ENCODE measurements at regions of chrX and their contacts with region 1.

Region 1: DNA sequence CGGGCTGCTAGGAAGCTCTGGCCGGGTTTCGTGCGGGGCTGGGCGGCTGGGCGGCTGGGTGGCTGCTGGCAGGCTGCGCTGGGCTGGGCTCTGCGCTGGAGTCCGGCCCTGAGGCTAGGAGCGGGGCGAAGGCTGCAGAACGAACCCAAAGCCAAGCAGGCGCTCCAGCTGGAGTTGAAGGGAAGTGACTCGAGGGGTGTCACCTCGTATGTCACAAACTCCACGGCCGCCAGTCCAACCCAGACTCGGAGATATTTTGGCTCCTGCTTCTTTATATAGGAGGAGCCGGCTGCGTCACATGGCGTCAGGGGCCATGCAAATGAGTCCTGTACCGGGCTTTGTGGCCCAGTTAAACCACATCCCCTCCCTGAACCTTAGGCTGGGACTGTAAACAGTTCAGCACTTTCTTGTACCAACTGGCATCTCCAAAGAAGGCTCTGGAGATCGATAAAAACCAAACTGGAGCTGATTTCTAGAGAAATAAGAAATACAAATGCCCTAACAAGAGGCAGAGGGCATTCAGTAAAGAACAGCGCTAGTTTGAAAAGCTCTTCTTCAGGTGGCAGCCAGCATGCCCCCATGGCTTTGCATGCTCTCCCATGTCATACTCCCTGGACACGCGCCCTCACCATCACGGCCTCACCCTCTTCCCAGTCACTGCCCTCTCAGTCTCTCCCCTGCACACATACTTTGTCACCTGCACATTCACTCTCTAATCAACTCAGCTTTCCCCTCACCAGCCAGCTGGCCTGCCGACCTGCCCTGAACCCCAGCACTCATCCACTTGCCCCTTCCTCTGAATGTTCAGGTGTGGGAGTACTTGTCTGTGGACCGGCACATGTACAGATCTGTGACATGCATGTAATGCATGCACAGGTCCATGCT is 58.5 kb downstream of the TSC22D3 start:
- DNase-seq: peak; percentile 84
- H3K4me3 ChIP-seq: peak overlapping the region; percentile 49 to 84 (median 58)
- H3K27ac ChIP-seq: peak overlapping the region; percentile 77
- H3K4me1 ChIP-seq: peaks cover 11% of the 10 kb centered on the region
- H3K27me3 ChIP-seq: no peaks in the 10 kb centered on the region
- CTCF ChIP-seq: no peak
- POLR2A ChIP-seq: peak; percentile 93

Region 2: DNA sequence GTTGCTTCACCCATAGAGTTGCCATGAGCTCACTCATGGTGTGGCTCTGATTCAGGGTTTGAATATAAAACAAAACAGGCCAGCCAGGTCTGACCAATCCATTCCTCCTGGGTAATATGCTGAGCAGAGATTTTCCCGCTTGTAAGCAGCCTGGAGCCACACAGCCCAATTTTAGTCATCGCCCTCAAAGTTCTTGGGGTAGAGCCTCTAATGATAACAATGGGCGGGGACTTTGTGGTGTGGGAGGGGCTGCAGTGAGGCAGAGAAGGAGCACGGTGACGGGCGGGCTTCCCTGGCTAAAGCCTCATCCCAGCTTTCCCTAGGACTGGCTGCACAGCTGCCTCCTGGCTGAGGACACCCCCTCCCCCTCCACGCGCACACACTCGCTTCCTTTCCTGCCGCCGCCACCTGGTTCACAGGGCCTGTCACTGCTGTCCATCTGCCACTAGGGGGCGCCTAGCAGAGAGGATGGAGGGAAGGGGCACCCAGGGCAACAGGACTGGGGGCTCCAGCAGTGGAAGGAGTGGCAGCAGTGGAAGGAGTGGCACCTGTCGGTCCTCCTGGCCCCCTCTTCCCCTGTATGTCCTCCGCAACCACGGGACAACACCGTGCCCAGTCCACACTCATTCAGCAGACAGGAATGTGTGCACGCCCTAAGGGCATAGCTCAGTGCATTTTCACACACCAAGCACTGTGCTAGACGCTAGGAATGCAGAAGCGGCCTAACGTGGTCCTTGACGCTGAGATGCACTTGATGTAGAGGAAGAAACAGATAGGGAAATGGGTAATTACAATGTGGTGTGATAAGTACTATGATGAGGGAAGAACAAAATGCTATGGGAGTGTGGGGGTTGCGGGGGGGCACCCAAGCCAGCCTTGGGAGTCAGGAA is 61.9 kb before region 1 on chrX:
- CTCF ChIA-PET with region 1: interaction called, 28 read pairs
- POLR2A ChIA-PET with region 1: interaction called, 4 read pairs
- dilution Hi-C with region 1: no loop called
- intact Hi-C with region 1: loop called (anchors 1 kb)
- DNase-seq: peak; percentile 49
- H3K4me3 ChIP-seq: no peak overlapping the region
- H3K27ac ChIP-seq: peak overlapping the region; percentile 45
- H3K4me1 ChIP-seq: peaks cover 6% of the 10 kb centered on the region
- H3K27me3 ChIP-seq: no peaks in the 10 kb centered on the region
- CTCF ChIP-seq: peak; percentile 65 to 74
- POLR2A ChIP-seq: no peak

Region 3: DNA sequence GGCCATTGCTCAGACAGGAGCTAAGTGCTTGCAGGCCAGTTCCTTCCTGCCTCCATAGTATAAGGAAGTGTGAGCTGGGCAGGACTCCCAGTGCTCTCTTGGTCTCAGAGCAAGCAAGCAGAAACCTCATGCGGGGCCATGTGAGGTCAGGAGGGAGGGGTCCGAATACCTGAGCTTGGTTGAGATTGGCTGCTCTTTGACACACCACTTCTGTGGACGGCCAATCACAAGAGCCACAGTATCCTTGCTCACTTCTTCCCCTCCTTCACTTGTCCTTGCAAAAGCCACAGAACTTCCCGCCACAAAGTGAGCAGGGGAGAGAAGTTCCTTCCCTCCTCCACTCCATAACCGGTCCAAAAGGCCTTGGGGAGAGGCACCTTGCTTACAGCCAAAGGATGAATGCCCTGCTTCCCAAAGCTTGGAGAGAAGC is 32.1 kb before region 1 on chrX:
- CTCF ChIA-PET with region 1: interaction called, 34 read pairs
- POLR2A ChIA-PET with region 1: no interaction called
- dilution Hi-C with region 1: no loop called
- intact Hi-C with region 1: no loop called
- DNase-seq: peak; percentile 83
- H3K4me3 ChIP-seq: no peak overlapping the region
- H3K27ac ChIP-seq: peak overlapping the region; percentile 14
- H3K4me1 ChIP-seq: peaks cover 41% of the 10 kb centered on the region
- H3K27me3 ChIP-seq: no peaks in the 10 kb centered on the region
- CTCF ChIP-seq: no peak
- POLR2A ChIP-seq: no peak

Region 4: GRCh38 chrX:107731831-107732502 is 14.9 kb after region 1 on chrX:
- CTCF ChIA-PET with region 1: interaction called, 15 read pairs
- POLR2A ChIA-PET with region 1: interaction called, 8 read pairs
- dilution Hi-C with region 1: no loop called
- intact Hi-C with region 1: no loop called
- DNase-seq: peak; percentile 90
- H3K4me3 ChIP-seq: no peak overlapping the region
- H3K27ac ChIP-seq: peak overlapping the region; percentile 13
- H3K4me1 ChIP-seq: peaks cover 24% of the 10 kb centered on the region
- H3K27me3 ChIP-seq: no peaks in the 10 kb centered on the region
- CTCF ChIP-seq: no peak
- POLR2A ChIP-seq: peak; percentile 26

Region 5: DNA sequence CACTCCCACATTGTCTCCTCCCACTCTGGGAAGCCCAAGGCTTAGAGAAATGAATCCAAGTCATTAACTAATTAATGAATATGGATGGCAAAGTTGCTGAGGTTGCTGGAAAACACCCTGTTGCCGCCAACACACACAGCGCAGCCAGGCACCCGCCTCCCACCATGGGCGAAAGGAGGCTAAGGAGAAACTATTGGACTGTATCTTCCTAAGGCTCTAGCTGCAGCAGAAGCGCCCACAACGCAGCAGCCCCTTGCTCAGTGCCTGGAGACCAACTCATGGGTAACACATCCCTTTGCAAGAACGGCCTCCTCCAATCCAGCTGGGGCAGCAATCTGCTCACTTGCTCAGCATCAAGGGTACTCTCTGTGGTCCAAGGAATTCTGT is 24.3 kb after region 1 on chrX:
- CTCF ChIA-PET with region 1: interaction called, 5 read pairs
- POLR2A ChIA-PET with region 1: no interaction called
- dilution Hi-C with region 1: no loop called
- intact Hi-C with region 1: loop called (anchors 1 kb)
- DNase-seq: no peak
- H3K4me3 ChIP-seq: no peak overlapping the region
- H3K27ac ChIP-seq: peak overlapping the region; percentile 2
- H3K4me1 ChIP-seq: peaks cover 14% of the 10 kb centered on the region
- H3K27me3 ChIP-seq: no peaks in the 10 kb centered on the region
- CTCF ChIP-seq: no peak
- POLR2A ChIP-seq: no peak

Region 6: GRCh38 chrX:107849740-107850421 is 132.8 kb after region 1 on chrX:
- CTCF ChIA-PET with region 1: no interaction called
- POLR2A ChIA-PET with region 1: no interaction called
- dilution Hi-C with region 1: no loop called
- intact Hi-C with region 1: no loop called
- DNase-seq: peak; percentile 69
- H3K4me3 ChIP-seq: peak overlapping the region in 1 of 3 experiments; percentile 11
- H3K27ac ChIP-seq: peak overlapping the region; percentile 76
- H3K4me1 ChIP-seq: peaks cover 56% of the 10 kb centered on the region
- H3K27me3 ChIP-seq: no peaks in the 10 kb centered on the region
- CTCF ChIP-seq: no peak
- POLR2A ChIP-seq: no peak

Region 7: GRCh38 chrX:107894038-107894437 is 177.0 kb after region 1 on chrX:
- CTCF ChIA-PET with region 1: interaction called, 3 read pairs
- POLR2A ChIA-PET with region 1: no interaction called
- dilution Hi-C with region 1: no loop called
- intact Hi-C with region 1: loop called (anchors 1 kb)
- DNase-seq: peak; percentile 47
- H3K4me3 ChIP-seq: no peak overlapping the region
- H3K27ac ChIP-seq: no peak overlapping the region
- H3K4me1 ChIP-seq: no peaks in the 10 kb centered on the region
- H3K27me3 ChIP-seq: no peaks in the 10 kb centered on the region
- CTCF ChIP-seq: peak in 1 of 2 donors; percentile 15
- POLR2A ChIP-seq: no peak

Region 8: GRCh38 chrX:107935664-107936433 is 218.8 kb after region 1 on chrX:
- CTCF ChIA-PET with region 1: no interaction called
- POLR2A ChIA-PET with region 1: no interaction called
- dilution Hi-C with region 1: no loop called
- intact Hi-C with region 1: no loop called
- DNase-seq: no peak
- H3K4me3 ChIP-seq: peak overlapping the region in 2 of 3 experiments; percentile 14 to 23
- H3K27ac ChIP-seq: no peak overlapping the region
- H3K4me1 ChIP-seq: peaks cover 7% of the 10 kb centered on the region
- H3K27me3 ChIP-seq: no peaks in the 10 kb centered on the region
- CTCF ChIP-seq: no peak
- POLR2A ChIP-seq: no peak

Region 9: GRCh38 chrX:108020631-108021030 is 303.6 kb after region 1 on chrX:
- CTCF ChIA-PET with region 1: no interaction called
- POLR2A ChIA-PET with region 1: no interaction called
- dilution Hi-C with region 1: no loop called
- intact Hi-C with region 1: loop called (anchors 10 kb)
- DNase-seq: peak; percentile 55
- H3K4me3 ChIP-seq: no peak overlapping the region
- H3K27ac ChIP-seq: no peak overlapping the region
- H3K4me1 ChIP-seq: peaks cover 19% of the 10 kb centered on the region
- H3K27me3 ChIP-seq: no peaks in the 10 kb centered on the region
- CTCF ChIP-seq: peak; percentile 26 to 44
- POLR2A ChIP-seq: no peak

Measured in endothelial cell of umbilical vein (primary cell).